Activated CD4-positive, alpha-beta T cell treated with anti-CD3 and anti-CD28 coated beads for 36 hours (primary cell): ENCODE measurements at regions of chr7 and their contacts with region 1.

Region 1: DNA sequence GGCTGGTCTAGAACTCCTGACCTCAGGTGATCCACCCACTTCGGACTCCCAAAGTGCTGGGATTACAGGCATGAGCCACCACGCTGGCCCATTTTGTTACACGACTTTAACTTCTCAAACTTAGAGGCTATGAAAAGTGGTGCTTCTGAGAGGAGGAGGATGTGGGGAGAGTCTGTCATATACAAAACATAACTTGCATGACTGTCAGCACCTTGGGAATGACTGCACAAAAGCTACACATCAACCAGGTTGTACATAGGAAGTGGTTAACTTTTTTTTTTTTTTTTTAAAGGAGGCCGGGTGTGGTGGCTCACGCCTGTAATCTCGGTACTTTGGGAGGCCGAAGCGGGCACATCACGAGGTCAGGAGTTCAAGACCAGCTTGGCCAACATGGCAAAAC is 43.4 kb upstream of the GSDME start:
- DNase-seq: peak; percentile 19
- ATAC-seq: peak; percentile 89
- H3K4me3 Mint-ChIP-seq: no peak overlapping the region
- H3K27ac Mint-ChIP-seq: peak overlapping the region; percentile 11
- H3K4me1 Mint-ChIP-seq: peaks cover 6% of the 10 kb centered on the region
- H3K27me3 Mint-ChIP-seq: no peaks in the 10 kb centered on the region

Region 2: GRCh38 chr7:24609059-24609458 is 191.6 kb before region 1 on chr7:
- CTCF ChIA-PET with region 1: no interaction called
- POLR2A ChIA-PET with region 1: no interaction called
- intact Hi-C with region 1: no loop called
- DNase-seq: peak; percentile 8
- ATAC-seq: no peak
- H3K4me3 Mint-ChIP-seq: no peak overlapping the region
- H3K27ac Mint-ChIP-seq: peak overlapping the region; percentile 47
- H3K4me1 Mint-ChIP-seq: peaks cover 29% of the 10 kb centered on the region
- H3K27me3 Mint-ChIP-seq: no peaks in the 10 kb centered on the region

Region 3: GRCh38 chr7:24812310-24812945 is 11.8 kb after region 1 on chr7:
- CTCF ChIA-PET with region 1: interaction called, 26 read pairs
- POLR2A ChIA-PET with region 1: no interaction called
- intact Hi-C with region 1: no loop called
- DNase-seq: peak; percentile 68
- ATAC-seq: peak; percentile 69
- H3K4me3 Mint-ChIP-seq: no peak overlapping the region
- H3K27ac Mint-ChIP-seq: no peak overlapping the region
- H3K4me1 Mint-ChIP-seq: no peaks in the 10 kb centered on the region
- H3K27me3 Mint-ChIP-seq: no peaks in the 10 kb centered on the region

Region 4: DNA sequence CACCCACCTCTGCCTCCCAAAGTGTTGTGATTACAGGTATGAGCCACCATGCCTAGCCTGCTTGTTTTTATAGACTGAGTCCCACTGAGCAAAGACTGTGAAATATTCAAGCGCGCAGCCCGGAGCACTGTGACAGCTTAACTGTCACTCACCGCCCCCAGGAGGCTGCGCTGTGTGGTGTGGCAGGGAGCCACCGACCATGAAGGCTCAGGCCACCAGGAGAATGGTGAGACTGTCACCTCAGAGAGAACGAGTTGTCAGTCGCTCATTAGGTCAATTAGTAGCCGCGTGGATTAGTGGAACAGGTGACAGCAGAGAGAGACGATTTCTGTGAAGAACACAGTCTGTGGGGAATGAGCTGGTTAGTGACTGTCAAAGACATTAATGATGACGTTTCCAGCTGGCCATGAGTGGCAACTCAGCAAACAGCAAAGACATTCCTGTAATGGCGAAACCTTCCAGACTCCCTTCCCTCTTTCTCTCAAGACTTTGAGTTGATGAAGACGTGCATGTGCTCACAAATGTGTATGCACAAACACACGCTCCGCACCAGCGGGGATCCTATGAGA is 259.9 kb after region 1 on chr7:
- CTCF ChIA-PET with region 1: no interaction called
- POLR2A ChIA-PET with region 1: no interaction called
- intact Hi-C with region 1: no loop called
- DNase-seq: no peak
- ATAC-seq: no peak
- H3K4me3 Mint-ChIP-seq: no peak overlapping the region
- H3K27ac Mint-ChIP-seq: no peak overlapping the region
- H3K4me1 Mint-ChIP-seq: no peaks in the 10 kb centered on the region
- H3K27me3 Mint-ChIP-seq: peaks cover 4% of the 10 kb centered on the region

Region 5: GRCh38 chr7:25105911-25106310 is 305.2 kb after region 1 on chr7:
- CTCF ChIA-PET with region 1: no interaction called
- POLR2A ChIA-PET with region 1: no interaction called
- intact Hi-C with region 1: no loop called
- DNase-seq: no peak
- ATAC-seq: no peak
- H3K4me3 Mint-ChIP-seq: no peak overlapping the region
- H3K27ac Mint-ChIP-seq: no peak overlapping the region
- H3K4me1 Mint-ChIP-seq: peaks cover 6% of the 10 kb centered on the region
- H3K27me3 Mint-ChIP-seq: peaks cover 2% of the 10 kb centered on the region